ENCODE measurements at regions of chr3 and their contacts with region 1.

Region 1: DNA sequence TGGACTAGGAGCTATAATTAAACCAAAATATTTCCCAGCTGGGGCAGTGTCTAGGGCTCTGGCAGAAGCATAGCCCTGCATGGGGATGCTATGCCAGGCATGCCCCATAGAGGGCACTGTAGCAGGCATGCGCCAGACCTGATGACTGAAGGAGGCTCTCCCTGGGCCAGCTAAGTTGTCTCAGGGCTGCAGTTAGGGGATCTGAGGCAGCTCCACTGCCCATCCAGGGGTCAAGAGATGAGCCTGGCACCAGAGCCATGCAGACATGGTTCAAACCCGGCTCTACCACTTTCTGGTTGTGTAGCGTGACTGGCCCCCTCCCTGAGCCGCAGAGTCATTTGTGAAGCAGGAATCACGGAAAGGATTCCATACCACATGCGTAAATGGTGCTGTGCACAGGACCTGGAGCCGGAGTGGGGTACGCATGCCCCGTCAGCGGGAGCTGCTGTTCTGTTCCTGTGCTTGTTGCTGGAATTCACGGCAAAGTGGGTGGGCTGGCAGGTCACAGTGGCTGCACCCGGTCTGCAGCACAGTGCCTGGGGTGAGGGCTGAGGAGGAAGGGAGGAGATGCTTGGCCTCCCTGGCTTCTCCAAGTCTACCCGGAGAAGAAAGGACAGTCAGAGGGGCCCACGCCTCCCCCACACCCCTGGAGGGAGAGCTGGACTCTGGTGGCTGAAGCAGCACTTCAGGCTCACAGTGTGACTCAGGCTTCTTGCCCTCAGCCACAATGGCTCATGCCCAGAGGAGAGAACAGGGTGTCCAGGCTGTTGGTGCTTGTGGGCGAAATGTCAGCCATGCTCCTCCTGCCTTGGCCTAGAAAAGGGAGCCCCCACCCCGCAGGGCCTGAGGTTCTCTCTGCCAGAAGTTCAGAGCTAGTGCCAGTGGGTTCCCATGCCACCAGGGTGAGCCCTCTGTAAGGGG is 43.1 kb downstream of the DNASE1L3 start:
- DNase-seq: peak; percentile 43 to 67 (median 52)
- H3K4me3 ChIP-seq: no peak overlapping the region
- H3K27ac ChIP-seq: no peak overlapping the region
- H3K4me1 ChIP-seq: no peaks in the 10 kb centered on the region
- H3K27me3 ChIP-seq: no peaks in the 10 kb centered on the region

Region 2: GRCh38 chr3:58101499-58102389 is 65.9 kb before region 1 on chr3:
- CTCF ChIA-PET with region 1: interaction called, 11 read pairs
- POLR2A ChIA-PET with region 1: no interaction called
- DNase-seq: no peak
- H3K4me3 ChIP-seq: no peak overlapping the region
- H3K27ac ChIP-seq: no peak overlapping the region
- H3K4me1 ChIP-seq: no peaks in the 10 kb centered on the region
- H3K27me3 ChIP-seq: no peaks in the 10 kb centered on the region

Region 3: GRCh38 chr3:58135712-58136543 is 31.8 kb before region 1 on chr3:
- CTCF ChIA-PET with region 1: interaction called, 10 read pairs
- POLR2A ChIA-PET with region 1: no interaction called
- DNase-seq: peak in 2 of 3 donors; percentile 8 to 15
- H3K4me3 ChIP-seq: no peak overlapping the region
- H3K27ac ChIP-seq: no peak overlapping the region
- H3K4me1 ChIP-seq: no peaks in the 10 kb centered on the region
- H3K27me3 ChIP-seq: no peaks in the 10 kb centered on the region

Region 4: GRCh38 chr3:58177747-58178527 is 10.2 kb after region 1 on chr3:
- CTCF ChIA-PET with region 1: interaction called, 15 read pairs
- POLR2A ChIA-PET with region 1: no interaction called
- DNase-seq: peak; percentile 88 to 92 (median 91)
- H3K4me3 ChIP-seq: peak overlapping the region in 6 of 7 experiments; percentile 35 to 77 (median 57)
- H3K27ac ChIP-seq: no peak overlapping the region
- H3K4me1 ChIP-seq: peaks cover 0 to 36% (median 34%) of the 10 kb centered on the region in 4 experiments
- H3K27me3 ChIP-seq: peaks cover 0 to 2% (median 0%) of the 10 kb centered on the region in 5 experiments

Region 5: GRCh38 chr3:58206406-58207011 is 38.8 kb after region 1 on chr3:
- CTCF ChIA-PET with region 1: no interaction called
- POLR2A ChIA-PET with region 1: no interaction called
- DNase-seq: no peak
- H3K4me3 ChIP-seq: no peak overlapping the region
- H3K27ac ChIP-seq: no peak overlapping the region
- H3K4me1 ChIP-seq: peaks cover 0 to 1% (median under 1%) of the 10 kb centered on the region in 4 experiments
- H3K27me3 ChIP-seq: peaks cover 0 to 2% (median 0%) of the 10 kb centered on the region in 5 experiments

Measured in common myeloid progenitor, CD34-positive (primary cell).